ENCODE measurements at regions of chr4 and their contacts with region 1.

Region 1: GRCh38 chr4:51895813-51896408 is 53.0 kb downstream of the DCUN1D4 start:
- DNase-seq: no peak
- ATAC-seq: peak; percentile 95
- H3K4me3 Mint-ChIP-seq: no peak overlapping the region
- H3K27ac Mint-ChIP-seq: no peak overlapping the region
- H3K4me1 Mint-ChIP-seq: peaks cover 2% of the 10 kb centered on the region
- H3K27me3 Mint-ChIP-seq: no peaks in the 10 kb centered on the region
- CTCF ChIP-seq: peak; percentile 39

Region 2: GRCh38 chr4:51831133-51831532 is 64.8 kb before region 1 on chr4:
- CTCF ChIA-PET with region 1: no interaction called
- POLR2A ChIA-PET with region 1: no interaction called
- intact Hi-C with region 1: loop called (anchors 1 kb)
- DNase-seq: peak; percentile 34
- ATAC-seq: peak; percentile 61
- H3K4me3 Mint-ChIP-seq: no peak overlapping the region
- H3K27ac Mint-ChIP-seq: no peak overlapping the region
- H3K4me1 Mint-ChIP-seq: no peaks in the 10 kb centered on the region
- H3K27me3 Mint-ChIP-seq: peaks cover 16% of the 10 kb centered on the region
- CTCF ChIP-seq: no peak

Region 3: DNA sequence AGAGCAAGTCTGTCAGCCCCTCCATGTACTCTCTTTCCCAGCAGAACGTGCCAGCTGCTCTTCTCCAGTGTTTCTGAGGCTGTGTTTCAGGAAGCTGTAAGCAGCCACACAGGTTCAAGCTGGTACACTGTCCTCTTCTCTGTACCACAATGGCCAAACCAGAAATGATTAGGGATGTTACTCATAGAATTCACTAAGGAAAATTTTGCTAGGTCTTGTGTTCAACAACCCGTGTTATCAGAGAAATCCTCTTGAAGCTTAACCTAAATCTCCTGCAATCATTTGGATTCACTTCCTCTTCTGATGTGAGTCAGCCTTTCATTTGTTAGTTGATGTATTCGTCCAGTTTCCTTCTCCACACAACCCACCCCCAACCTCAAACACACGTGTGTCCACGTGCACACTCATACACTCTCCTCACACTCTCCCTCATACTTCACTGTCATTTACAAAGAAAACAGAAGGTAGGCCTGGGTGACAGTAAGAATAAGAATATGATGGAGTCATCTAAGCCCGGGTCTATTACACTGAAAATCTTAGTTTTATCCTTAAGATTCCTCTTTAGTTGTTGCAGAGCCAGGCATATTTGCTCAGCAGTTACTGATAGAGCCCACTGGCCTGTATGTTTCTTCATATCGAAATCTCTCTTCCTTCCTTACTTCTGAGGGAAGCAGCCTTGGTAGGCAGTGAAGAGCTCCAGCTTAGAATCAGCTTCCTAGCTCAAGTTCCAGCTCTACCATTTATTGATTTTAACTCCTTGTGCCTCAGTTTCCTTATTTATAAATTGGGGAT is 10.5 kb after region 1 on chr4:
- CTCF ChIA-PET with region 1: interaction called, 5 read pairs
- POLR2A ChIA-PET with region 1: no interaction called
- intact Hi-C with region 1: loop called (anchors 1 kb)
- DNase-seq: no peak
- ATAC-seq: peak; percentile 92
- H3K4me3 Mint-ChIP-seq: no peak overlapping the region
- H3K27ac Mint-ChIP-seq: peak overlapping the region; percentile 51
- H3K4me1 Mint-ChIP-seq: peaks cover 13% of the 10 kb centered on the region
- H3K27me3 Mint-ChIP-seq: no peaks in the 10 kb centered on the region
- CTCF ChIP-seq: no peak

Region 4: GRCh38 chr4:51965862-51966261 is 70.0 kb after region 1 on chr4:
- CTCF ChIA-PET with region 1: no interaction called
- POLR2A ChIA-PET with region 1: no interaction called
- intact Hi-C with region 1: no loop called
- DNase-seq: no peak
- ATAC-seq: no peak
- H3K4me3 Mint-ChIP-seq: no peak overlapping the region
- H3K27ac Mint-ChIP-seq: no peak overlapping the region
- H3K4me1 Mint-ChIP-seq: no peaks in the 10 kb centered on the region
- H3K27me3 Mint-ChIP-seq: peaks cover 1% of the 10 kb centered on the region
- CTCF ChIP-seq: no peak

Region 5: GRCh38 chr4:52028969-52029368 is 133.1 kb after region 1 on chr4:
- CTCF ChIA-PET with region 1: interaction called, 7 read pairs
- POLR2A ChIA-PET with region 1: no interaction called
- intact Hi-C with region 1: loop called (anchors 1 kb)
- DNase-seq: no peak
- ATAC-seq: no peak
- H3K4me3 Mint-ChIP-seq: no peak overlapping the region
- H3K27ac Mint-ChIP-seq: no peak overlapping the region
- H3K4me1 Mint-ChIP-seq: no peaks in the 10 kb centered on the region
- H3K27me3 Mint-ChIP-seq: no peaks in the 10 kb centered on the region
- CTCF ChIP-seq: no peak

Region 6: DNA sequence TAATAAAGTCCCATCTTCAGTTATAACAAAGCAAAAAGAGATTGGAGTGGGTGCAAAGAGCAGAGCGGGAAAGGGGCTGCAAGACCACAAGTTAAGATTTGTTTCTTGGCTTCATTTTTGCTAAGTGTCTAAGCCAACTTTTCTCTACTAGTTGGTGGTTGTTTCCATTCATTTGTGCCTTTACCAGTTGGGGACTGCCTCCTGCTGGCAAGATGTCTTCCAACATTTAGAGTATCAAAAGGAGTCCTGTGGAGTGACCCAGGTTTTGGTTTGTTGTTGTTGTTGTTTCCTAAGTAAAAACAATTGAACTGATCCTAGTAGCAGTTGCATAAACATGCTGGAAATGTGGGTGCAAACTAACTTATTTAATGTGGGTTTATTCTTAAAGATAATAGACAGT is 276.3 kb after region 1 on chr4:
- CTCF ChIA-PET with region 1: interaction called, 3 read pairs
- POLR2A ChIA-PET with region 1: no interaction called
- intact Hi-C with region 1: loop called (anchors 5 kb)
- DNase-seq: no peak
- ATAC-seq: no peak
- H3K4me3 Mint-ChIP-seq: no peak overlapping the region
- H3K27ac Mint-ChIP-seq: no peak overlapping the region
- H3K4me1 Mint-ChIP-seq: no peaks in the 10 kb centered on the region
- H3K27me3 Mint-ChIP-seq: no peaks in the 10 kb centered on the region
- CTCF ChIP-seq: no peak

Region 7: DNA sequence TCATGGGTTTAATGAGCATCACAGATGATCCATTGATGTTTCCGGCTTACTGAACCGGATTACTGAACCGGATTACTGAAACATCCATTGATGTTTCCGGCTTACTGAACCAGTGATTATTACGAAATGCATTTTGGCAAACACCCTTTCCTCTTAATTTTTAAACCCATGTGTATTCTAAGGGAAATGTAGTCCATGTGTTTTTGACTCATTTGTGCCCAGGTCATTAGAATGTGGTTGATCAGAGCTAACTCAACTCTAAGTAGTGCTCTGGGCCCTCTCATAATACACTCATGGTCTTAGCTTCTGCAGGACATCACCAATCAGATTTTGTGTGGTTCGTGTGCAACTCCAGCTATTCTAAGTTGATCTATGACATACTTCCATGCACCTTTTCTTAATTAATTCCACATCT is 296.8 kb after region 1 on chr4:
- CTCF ChIA-PET with region 1: no interaction called
- POLR2A ChIA-PET with region 1: no interaction called
- intact Hi-C with region 1: no loop called
- DNase-seq: no peak
- ATAC-seq: no peak
- H3K4me3 Mint-ChIP-seq: no peak overlapping the region
- H3K27ac Mint-ChIP-seq: no peak overlapping the region
- H3K4me1 Mint-ChIP-seq: no peaks in the 10 kb centered on the region
- H3K27me3 Mint-ChIP-seq: no peaks in the 10 kb centered on the region
- CTCF ChIP-seq: no peak

Measured in activated B cell treated with CpG ODN at 0.5 μM for 24 hours (primary cell).